Left colon (tissue), 2 donors: ENCODE measurements at regions of chr11 and their contacts with region 1.

Region 1: DNA sequence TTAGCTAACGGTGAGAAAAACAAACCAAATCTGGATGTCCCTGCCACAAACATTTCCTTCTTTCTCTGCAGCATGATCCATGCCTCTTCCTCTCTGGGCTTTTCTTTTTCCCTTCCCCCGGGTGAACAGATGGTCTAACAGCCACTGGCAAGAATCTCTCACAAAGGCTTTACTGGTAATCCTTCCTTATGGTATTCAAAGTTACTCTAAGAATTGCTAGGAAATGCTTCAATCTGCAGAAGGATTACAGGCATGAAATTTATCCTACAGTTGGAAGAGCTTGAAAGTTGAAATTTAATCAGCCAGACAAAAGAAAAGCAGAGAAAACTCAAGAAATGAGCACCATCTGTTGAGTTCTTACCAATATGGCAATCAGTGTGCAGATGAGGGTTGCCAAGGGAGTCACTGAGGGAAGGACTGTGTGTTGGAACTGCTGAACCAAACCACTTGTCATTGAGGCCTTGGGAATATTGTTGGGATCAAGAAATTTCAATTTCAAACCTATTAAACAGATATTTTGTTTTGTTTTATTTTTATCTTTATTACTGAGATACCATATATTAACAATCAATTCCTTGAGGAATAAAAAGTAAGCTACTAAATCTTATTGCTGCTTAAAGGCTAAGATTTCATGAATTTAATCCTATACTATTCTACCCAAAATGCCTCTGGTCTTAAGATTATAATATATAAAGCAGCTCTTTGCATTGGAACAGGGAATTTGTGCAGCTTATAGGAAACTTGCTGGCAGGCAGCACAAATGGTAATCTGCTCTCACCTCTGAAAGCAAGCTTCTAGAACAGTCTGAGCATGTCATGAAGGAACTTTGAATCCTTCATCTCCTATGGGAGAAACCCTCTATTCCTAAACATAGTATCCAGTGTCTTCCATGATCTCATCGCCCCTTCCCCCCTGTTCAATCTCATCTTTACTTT is 29.7 kb upstream of the NDUFC2 start:
- DNase-seq: no peak
- ATAC-seq: no peak

Region 2: GRCh38 chr11:78127401-78127800 is 18.1 kb after region 1 on chr11:
- intact Hi-C with region 1: loop called in 1 of 2 experiments (anchors 2 kb)
- DNase-seq: no peak
- ATAC-seq: no peak